ENCODE measurements at regions of chr16 and their contacts with region 1.

Region 1: GRCh38 chr16:13291591-13292333 is 390.4 kb downstream of the SHISA9 start:
- DNase-seq: no peak
- H3K4me3 ChIP-seq: no peak overlapping the region
- H3K27ac ChIP-seq: no peak overlapping the region
- H3K4me1 ChIP-seq: no peaks in the 10 kb centered on the region
- H3K27me3 ChIP-seq: no peaks in the 10 kb centered on the region
- CTCF ChIP-seq: no peak

Region 2: DNA sequence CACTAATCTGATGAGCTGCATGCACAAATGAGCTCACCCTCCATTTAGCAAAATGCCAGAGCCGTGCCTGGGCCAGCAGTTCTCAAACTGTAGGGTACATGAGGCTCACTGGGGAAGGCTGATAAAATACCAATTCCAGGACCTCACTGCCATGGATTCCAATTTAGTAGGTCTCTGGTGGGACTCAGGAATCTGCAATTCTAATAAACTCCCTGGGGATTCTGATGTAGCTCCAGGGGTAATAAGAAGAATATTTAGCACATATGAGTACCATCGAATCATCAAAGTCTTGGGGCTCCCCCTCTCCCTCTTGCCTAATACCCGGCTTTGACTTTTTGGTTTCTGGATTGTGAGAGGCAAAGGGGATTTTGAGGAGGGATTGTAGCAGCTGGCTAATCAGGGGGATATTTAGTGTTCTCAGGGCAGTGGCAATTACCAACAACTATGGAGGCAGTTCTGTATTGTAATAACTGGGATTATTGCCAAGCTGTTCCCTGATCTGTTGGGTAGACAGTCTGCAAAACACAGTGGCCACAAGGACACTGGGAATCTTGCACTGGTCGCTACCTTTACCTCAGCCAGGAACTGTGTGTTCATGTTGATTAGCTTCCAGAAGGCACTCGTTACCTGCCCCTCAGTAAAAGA is 250.0 kb before region 1 on chr16:
- intact Hi-C with region 1: no loop called
- DNase-seq: no peak
- H3K4me3 ChIP-seq: no peak overlapping the region
- H3K27ac ChIP-seq: no peak overlapping the region
- H3K4me1 ChIP-seq: no peaks in the 10 kb centered on the region
- H3K27me3 ChIP-seq: no peaks in the 10 kb centered on the region
- CTCF ChIP-seq: no peak

Region 3: DNA sequence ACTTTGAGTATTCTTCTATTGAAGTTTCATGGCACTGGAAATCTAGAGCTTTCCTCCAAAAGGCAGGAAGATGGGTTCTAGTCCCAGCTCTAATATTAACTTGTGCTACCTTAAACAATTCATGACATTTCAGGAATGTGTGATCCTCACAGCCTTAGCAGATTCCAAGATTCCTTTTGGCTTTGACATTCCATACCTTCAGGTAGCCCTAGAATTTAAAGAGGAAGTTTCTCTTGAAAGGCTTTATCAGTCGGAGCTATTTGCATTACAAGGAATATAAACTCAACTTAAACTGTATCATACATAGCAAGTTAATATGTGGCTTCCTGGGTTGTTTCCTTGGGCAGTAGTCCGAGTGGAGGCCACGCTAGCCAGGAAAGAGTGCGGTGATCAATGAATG is 60.4 kb before region 1 on chr16:
- intact Hi-C with region 1: loop called (anchors 10 kb)
- DNase-seq: no peak
- H3K4me3 ChIP-seq: no peak overlapping the region
- H3K27ac ChIP-seq: no peak overlapping the region
- H3K4me1 ChIP-seq: no peaks in the 10 kb centered on the region
- H3K27me3 ChIP-seq: peaks cover 0 to 3% of the 10 kb centered on the region in 2 donors
- CTCF ChIP-seq: no peak

Region 4: GRCh38 chr16:13331919-13332318 is 40.2 kb after region 1 on chr16:
- intact Hi-C with region 1: no loop called
- DNase-seq: no peak
- H3K4me3 ChIP-seq: no peak overlapping the region
- H3K27ac ChIP-seq: no peak overlapping the region
- H3K4me1 ChIP-seq: no peaks in the 10 kb centered on the region
- H3K27me3 ChIP-seq: no peaks in the 10 kb centered on the region
- CTCF ChIP-seq: no peak

Measured in tibial artery (tissue), 4 donors.